ENCODE measurements at regions of chr11 and their contacts with region 1.

Region 1: DNA sequence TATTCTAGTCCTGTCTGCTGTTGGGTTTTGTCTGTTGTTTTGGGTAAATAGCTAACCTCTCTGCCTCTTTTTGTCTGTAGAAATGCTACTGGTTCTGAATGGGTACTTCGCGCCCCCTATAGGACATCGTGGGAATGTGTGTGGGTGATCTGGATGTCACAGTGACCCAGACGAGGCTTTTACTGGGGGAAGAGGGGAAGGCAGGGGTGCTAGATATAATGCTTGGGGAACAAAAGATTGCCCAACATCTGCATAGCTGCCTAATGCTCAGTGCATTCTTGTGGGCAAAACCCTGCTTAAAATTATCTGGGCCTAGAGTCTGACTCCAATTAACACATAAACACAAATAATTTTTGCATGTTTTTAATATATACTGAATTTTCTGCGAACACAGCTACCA is 57.7 kb downstream of the BMAL1 start:
- DNase-seq: peak; percentile 83
- ATAC-seq: peak; percentile 94
- H3K4me3 Mint-ChIP-seq: no peak overlapping the region
- H3K27ac Mint-ChIP-seq: no peak overlapping the region
- H3K4me1 Mint-ChIP-seq: no peaks in the 10 kb centered on the region
- H3K27me3 Mint-ChIP-seq: no peaks in the 10 kb centered on the region
- CTCF ChIP-seq: peak; percentile 79

Region 2: DNA sequence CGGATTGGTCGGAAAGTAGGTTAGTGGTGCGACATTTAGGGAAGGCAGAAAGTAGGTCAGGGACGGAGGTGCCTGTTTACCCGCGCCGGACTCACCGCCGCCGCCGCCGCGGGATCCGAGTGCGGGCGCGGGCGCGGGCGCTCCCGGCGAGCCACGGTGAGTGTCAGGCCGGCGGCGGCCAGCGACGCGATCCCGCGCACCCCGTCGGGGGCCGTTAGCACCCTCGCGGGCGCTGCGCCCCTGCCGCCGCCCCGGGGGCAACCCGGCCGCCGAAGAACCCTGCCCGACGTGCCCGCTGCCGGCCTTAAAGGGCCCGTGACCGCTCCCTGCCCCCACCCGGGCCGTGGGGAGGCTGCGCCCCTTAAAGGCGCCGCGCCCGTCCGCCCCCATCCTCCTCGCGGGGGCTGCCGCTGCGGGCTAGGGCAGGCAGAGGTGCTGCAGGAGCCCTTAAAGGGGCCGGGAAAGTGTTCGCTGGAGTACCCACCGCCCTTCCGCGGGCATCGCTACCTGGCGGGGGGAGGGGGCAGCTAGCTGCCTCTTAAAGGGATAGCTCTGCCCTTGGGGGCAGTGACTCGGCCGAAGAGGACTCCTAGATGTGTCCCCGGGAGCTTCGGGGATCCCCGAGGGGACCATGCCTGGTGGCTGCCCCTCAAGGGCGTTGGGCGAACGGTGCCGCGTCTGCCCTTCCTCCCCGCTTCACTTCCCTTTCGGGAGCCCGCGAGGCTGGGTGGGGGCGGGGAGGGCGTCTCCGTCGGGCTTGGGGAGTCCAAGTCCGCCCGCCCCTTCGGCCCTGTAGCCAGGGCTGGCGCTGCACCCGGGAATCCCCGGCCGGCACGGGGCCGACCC is 57.3 kb before region 1 on chr11 and contains the start of gene BMAL1:
- CTCF ChIA-PET with region 1: interaction called, 10 read pairs
- POLR2A ChIA-PET with region 1: no interaction called
- DNase-seq: peak; percentile 39
- ATAC-seq: peak; percentile 4
- H3K4me3 Mint-ChIP-seq: peak within 1 kb of the TSS; percentile 93
- H3K27ac Mint-ChIP-seq: peak within 1 kb of the TSS; percentile 24; the same call in 1 of the 2 replicates
- H3K4me1 Mint-ChIP-seq: peaks cover 34% of the 10 kb centered on the region
- H3K27me3 Mint-ChIP-seq: peaks cover 75% of the 10 kb centered on the region
- CTCF ChIP-seq: no peak
- total RNA-seq, gene BMAL1: 5.1 to 8.3 TPM (median 8.1 TPM) in 3 replicates

Region 3: GRCh38 chr11:13291800-13292199 is 43.5 kb before region 1 on chr11:
- CTCF ChIA-PET with region 1: interaction called, 12 read pairs
- POLR2A ChIA-PET with region 1: no interaction called
- DNase-seq: no peak
- ATAC-seq: no peak
- H3K4me3 Mint-ChIP-seq: no peak overlapping the region
- H3K27ac Mint-ChIP-seq: no peak overlapping the region
- H3K4me1 Mint-ChIP-seq: peaks cover 7% of the 10 kb centered on the region
- H3K27me3 Mint-ChIP-seq: no peaks in the 10 kb centered on the region
- CTCF ChIP-seq: no peak

Region 4: GRCh38 chr11:13318498-13319295 is 16.6 kb before region 1 on chr11:
- CTCF ChIA-PET with region 1: interaction called, 13 read pairs
- POLR2A ChIA-PET with region 1: no interaction called
- DNase-seq: no peak
- ATAC-seq: no peak
- H3K4me3 Mint-ChIP-seq: no peak overlapping the region
- H3K27ac Mint-ChIP-seq: no peak overlapping the region
- H3K4me1 Mint-ChIP-seq: peaks cover 20% of the 10 kb centered on the region
- H3K27me3 Mint-ChIP-seq: no peaks in the 10 kb centered on the region
- CTCF ChIP-seq: no peak

Region 5: GRCh38 chr11:13423372-13423771 is 88.1 kb after region 1 on chr11:
- CTCF ChIA-PET with region 1: no interaction called
- POLR2A ChIA-PET with region 1: no interaction called
- DNase-seq: no peak
- ATAC-seq: no peak
- H3K4me3 Mint-ChIP-seq: no peak overlapping the region
- H3K27ac Mint-ChIP-seq: no peak overlapping the region
- H3K4me1 Mint-ChIP-seq: no peaks in the 10 kb centered on the region
- H3K27me3 Mint-ChIP-seq: no peaks in the 10 kb centered on the region
- CTCF ChIP-seq: no peak